PC-9 (cell line): ENCODE measurements at regions of chr6 and their contacts with region 1.

Region 1: GRCh38 chr6:26285143-26286134 is 79.6 kb upstream of the BTN3A2 start:
- DNase-seq: peak; percentile 96 to 99
- H3K4me3 ChIP-seq: peak overlapping the region; percentile 84
- H3K27ac ChIP-seq: peak overlapping the region; percentile 93
- H3K4me1 ChIP-seq: peaks cover 11% of the 10 kb centered on the region
- H3K27me3 ChIP-seq: no peaks in the 10 kb centered on the region
- CTCF ChIP-seq: no peak

Region 2: DNA sequence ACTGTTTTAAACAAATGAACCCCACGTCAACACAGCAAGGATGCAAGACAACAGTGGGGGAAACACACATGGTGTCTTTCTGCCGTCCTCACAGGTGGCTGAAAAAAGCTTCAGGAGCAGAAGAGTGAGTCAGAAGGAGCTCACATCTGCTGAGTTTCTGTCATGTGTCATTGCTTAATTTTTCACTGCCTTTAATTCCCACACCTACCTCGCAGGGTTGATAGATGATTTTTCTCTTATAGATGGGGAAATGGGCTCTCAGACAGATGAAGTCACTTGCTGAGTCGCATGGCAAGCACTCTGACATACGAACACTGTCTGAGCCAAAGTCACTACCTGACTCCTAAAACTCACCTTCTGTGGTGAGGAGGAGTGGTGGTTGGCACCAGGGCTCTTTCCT is 1034.6 kb before region 1 on chr6:
- CTCF ChIA-PET with region 1: no interaction called
- POLR2A ChIA-PET with region 1: no interaction called
- intact Hi-C with region 1: no loop called
- DNase-seq: peak; percentile 2 to 70
- H3K4me3 ChIP-seq: no peak overlapping the region
- H3K27ac ChIP-seq: 0 out of 2 replicates have a peak overlapping the region, but pooled peaks have one; percentile 18
- H3K4me1 ChIP-seq: peaks cover 6% of the 10 kb centered on the region; the same call in 1 of the 2 replicates
- H3K27me3 ChIP-seq: no peaks in the 10 kb centered on the region
- CTCF ChIP-seq: no peak

Region 3: DNA sequence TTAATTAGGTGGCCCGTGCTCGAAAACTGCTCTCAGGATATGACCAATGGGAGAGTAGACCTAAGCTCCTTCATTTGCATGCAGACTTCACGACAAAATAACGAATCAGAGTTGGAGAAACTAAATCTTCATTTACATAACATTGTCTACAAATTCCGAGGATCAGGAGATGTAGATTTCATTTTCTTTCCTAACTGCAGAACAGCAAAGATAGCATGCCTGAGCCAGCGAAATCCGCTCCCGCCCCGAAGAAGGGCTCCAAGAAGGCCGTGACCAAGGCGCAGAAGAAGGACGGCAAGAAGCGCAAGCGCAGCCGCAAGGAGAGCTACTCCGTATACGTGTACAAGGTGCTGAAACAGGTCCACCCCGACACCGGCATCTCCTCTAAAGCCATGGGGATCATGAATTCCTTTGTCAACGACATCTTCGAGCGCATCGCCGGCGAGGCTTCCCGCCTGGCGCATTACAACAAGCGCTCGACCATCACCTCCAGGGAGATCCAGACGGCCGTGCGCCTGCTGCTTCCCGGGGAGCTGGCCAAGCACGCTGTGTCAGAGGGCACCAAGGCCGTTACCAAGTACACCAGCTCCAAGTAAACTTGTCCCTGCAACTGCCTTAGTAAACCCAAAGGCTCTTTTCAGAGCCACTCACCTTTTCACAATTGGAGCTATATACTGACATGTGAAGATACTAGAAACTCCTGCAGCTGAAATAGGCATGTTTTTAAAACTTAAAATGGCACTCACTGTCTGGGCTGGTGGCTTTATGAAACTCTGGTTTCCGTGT is 101.7 kb before region 1 on chr6:
- CTCF ChIA-PET with region 1: no interaction called
- POLR2A ChIA-PET with region 1: no interaction called
- intact Hi-C with region 1: loop called (anchors 2 kb)
- DNase-seq: peak; percentile 72 to 87
- H3K4me3 ChIP-seq: peak overlapping the region; percentile 54
- H3K27ac ChIP-seq: peak overlapping the region; percentile 65
- H3K4me1 ChIP-seq: peaks cover 12% of the 10 kb centered on the region; the same call in 1 of the 2 replicates
- H3K27me3 ChIP-seq: no peaks in the 10 kb centered on the region
- CTCF ChIP-seq: no peak

Region 4: DNA sequence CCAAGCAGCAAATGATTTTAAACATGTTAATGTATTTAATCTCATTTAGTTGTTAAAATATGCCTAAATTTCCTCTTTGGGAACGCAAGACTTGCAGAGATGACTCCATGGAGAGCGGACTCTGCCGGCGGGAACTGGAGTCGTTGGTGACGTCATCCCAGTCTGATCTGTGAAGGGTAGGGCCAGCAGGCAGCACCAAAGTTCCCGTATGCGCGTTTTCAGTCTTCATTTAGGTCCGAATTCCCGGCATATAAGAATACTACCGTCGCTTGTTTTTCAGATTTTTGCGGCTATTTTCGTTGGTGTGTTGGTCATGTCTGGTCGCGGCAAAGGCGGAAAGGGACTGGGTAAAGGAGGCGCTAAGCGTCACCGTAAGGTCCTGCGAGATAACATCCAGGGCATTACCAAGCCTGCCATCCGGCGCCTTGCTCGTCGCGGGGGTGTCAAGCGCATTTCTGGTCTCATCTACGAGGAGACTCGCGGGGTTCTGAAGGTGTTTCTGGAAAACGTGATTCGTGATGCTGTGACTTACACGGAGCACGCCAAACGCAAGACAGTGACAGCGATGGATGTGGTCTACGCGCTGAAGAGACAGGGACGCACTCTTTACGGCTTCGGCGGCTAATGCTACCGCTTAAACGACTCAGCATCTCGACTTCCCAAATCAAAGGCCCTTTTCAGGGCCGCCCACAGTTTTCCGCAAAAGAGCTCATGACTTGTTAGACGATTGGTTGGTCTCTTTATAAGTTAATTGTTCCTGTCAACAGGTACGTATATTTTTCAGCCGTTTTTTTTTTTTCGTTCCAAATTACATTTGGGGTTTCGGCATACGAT is 80.9 kb before region 1 on chr6:
- CTCF ChIA-PET with region 1: no interaction called
- POLR2A ChIA-PET with region 1: interaction called, 10 read pairs
- intact Hi-C with region 1: loop called (anchors 1 kb)
- DNase-seq: peak; percentile 91 to 94
- H3K4me3 ChIP-seq: peak overlapping the region; percentile 63
- H3K27ac ChIP-seq: peak overlapping the region; percentile 91
- H3K4me1 ChIP-seq: peaks cover 36% of the 10 kb centered on the region
- H3K27me3 ChIP-seq: no peaks in the 10 kb centered on the region
- CTCF ChIP-seq: 0 out of 2 replicates have a peak, but pooled peaks have one; percentile 20

Region 5: DNA sequence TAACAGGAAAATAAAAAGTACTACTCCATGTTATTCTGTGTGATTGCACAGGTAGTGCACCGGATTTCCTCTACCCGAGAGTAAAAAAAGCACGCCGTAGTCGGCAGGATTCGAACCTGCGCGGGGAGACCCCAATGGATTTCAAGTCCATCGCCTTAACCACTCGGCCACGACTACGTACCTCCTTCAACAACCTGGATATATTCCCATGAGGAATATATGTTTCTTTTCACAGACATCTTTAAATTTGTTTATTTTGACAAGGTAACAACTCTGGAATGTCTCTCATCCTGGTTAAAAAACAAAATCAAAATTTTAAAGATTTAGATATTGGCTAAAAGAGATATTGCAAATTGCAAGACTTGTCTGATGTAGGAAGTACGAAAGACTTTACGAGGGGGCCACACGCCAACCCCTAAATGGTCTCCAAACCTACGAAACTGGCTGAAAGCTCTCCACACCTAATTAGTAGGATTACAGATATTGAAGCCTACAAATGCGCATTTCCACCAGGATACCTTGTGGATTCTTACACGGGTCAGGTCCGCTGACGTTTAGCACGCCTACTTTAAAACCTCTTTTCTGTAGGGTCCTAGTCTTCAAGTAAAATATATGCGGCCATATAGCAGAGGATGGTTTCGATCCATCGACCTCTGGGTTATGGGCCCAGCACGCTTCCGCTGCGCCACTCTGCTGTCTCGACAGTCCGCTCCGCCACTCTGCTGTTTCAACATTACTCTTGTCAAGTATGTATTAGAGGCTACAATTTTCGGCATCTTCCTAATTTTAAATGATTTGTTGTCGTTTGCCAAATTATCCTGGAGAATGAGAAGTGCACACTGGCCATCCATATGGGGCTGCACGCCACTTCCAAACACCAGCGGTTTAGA is 27.3 kb after region 1 on chr6:
- CTCF ChIA-PET with region 1: no interaction called
- POLR2A ChIA-PET with region 1: no interaction called
- intact Hi-C with region 1: loop called (anchors 1 kb)
- DNase-seq: peak; percentile 74 to 77
- H3K4me3 ChIP-seq: peak overlapping the region; percentile 69
- H3K27ac ChIP-seq: peak overlapping the region; percentile 74
- H3K4me1 ChIP-seq: peaks cover 13% of the 10 kb centered on the region
- H3K27me3 ChIP-seq: no peaks in the 10 kb centered on the region
- CTCF ChIP-seq: no peak

Region 6: GRCh38 chr6:26322645-26323482 is 37.4 kb after region 1 on chr6:
- CTCF ChIA-PET with region 1: no interaction called
- POLR2A ChIA-PET with region 1: no interaction called
- intact Hi-C with region 1: loop called (anchors 2 kb)
- DNase-seq: peak; percentile 77 to 88
- H3K4me3 ChIP-seq: peak overlapping the region; percentile 72
- H3K27ac ChIP-seq: peak overlapping the region; percentile 57
- H3K4me1 ChIP-seq: peaks cover 22% of the 10 kb centered on the region
- H3K27me3 ChIP-seq: no peaks in the 10 kb centered on the region
- CTCF ChIP-seq: no peak

Region 7: DNA sequence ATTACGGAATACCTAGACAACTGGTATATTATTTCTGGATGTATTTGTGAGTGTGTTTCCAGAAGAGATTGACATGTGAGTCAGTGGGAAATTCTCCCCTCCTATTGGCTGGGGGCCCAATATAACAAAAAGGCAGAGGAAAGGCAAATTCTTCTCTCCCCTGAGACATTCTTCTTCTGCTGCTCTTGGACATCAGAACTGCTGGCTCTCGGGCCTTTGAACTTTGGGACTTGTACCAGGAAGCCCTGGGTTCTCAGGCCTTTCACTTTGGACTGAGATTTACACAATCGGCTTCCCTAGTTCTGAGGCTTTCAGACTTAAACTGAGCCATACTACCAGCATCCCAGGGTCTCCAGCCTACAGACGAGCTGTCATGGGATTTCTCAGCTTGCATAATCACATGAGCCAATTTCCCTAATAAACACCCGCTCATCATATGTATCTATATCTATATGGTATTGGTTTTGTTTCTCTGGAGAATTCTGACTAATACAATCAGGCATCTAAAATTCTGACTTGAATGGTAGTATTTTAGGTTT is 147.3 kb after region 1 on chr6:
- CTCF ChIA-PET with region 1: no interaction called
- POLR2A ChIA-PET with region 1: interaction called, 20 read pairs
- intact Hi-C with region 1: no loop called
- DNase-seq: no peak
- H3K4me3 ChIP-seq: no peak overlapping the region
- H3K27ac ChIP-seq: no peak overlapping the region
- H3K4me1 ChIP-seq: no peaks in the 10 kb centered on the region
- H3K27me3 ChIP-seq: no peaks in the 10 kb centered on the region
- CTCF ChIP-seq: no peak

Region 8: GRCh38 chr6:27132532-27133280 is 847.3 kb after region 1 on chr6:
- CTCF ChIA-PET with region 1: no interaction called
- POLR2A ChIA-PET with region 1: interaction called, 4 read pairs
- intact Hi-C with region 1: loop called (anchors 10 kb)
- DNase-seq: peak; percentile 95 to 98
- H3K4me3 ChIP-seq: peak overlapping the region; percentile 74
- H3K27ac ChIP-seq: peak overlapping the region; percentile 80
- H3K4me1 ChIP-seq: peaks cover 16% of the 10 kb centered on the region
- H3K27me3 ChIP-seq: no peaks in the 10 kb centered on the region
- CTCF ChIP-seq: no peak